KBM-7 (cell line): ENCODE measurements at regions of chr18 and their contacts with region 1.

Region 1: GRCh38 chr18:21548637-21549036 is 51.9 kb downstream of the ESCO1 start:
- DNase-seq: no peak

Region 2: GRCh38 chr18:21629089-21629832 is 80.6 kb after region 1 on chr18:
- in situ Hi-C with region 1: loop called (anchors 25 kb)
- DNase-seq: no peak